ENCODE measurements at regions of chr11 and their contacts with region 1.

Region 1: DNA sequence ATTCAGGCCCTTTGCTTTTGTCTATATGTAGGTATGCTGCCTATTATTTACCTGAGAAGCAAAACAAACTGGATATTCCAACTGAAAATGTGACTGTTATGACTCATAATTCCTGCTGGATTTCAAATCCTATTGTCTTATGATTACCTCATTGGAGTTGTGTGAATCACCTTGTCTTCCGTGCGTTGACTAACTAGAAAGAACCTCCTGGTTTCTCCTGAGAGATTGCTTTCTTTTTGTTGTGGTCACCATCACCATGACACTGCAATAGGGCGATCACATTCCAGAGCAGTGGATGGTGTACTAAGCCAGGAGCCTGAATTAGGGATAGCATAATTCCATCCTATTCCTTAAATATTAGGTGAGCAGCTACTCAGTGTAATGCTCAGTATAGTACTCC is 23.0 kb upstream of the EXPH5 start:
- DNase-seq: peak; percentile 66 to 100
- H3K4me3 ChIP-seq: no peak overlapping the region
- H3K27ac ChIP-seq: peak overlapping the region; percentile 90
- H3K4me1 ChIP-seq: peaks cover 45% of the 10 kb centered on the region
- H3K27me3 ChIP-seq: no peaks in the 10 kb centered on the region
- CTCF ChIP-seq: no peak

Region 2: DNA sequence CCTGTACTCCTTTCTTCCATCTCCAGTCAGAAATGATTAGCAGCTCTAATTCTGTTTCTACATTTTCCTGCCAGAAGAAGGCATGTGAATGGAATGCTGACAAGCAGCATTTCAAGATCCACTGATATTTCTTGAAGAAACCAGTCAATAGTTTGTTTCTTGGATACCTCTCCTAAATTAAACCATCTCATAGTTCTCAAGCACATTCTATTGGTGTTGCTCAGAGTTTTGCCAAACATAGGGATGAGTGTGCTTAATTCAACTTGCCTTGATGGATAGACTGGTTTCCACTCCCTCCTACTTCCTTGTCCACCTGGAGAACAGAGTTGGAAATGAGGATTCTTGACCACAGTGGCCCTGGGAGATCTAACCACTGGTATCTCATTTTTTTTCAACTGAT is 18.5 kb after region 1 on chr11:
- CTCF ChIA-PET with region 1: no interaction called
- POLR2A ChIA-PET with region 1: no interaction called
- intact Hi-C with region 1: loop called (anchors 1 kb)
- DNase-seq: peak; percentile 62 to 100
- H3K4me3 ChIP-seq: 0 out of 2 replicates have a peak overlapping the region, but pooled peaks have one; percentile 20
- H3K27ac ChIP-seq: peak overlapping the region; percentile 95
- H3K4me1 ChIP-seq: peaks cover 27% of the 10 kb centered on the region
- H3K27me3 ChIP-seq: no peaks in the 10 kb centered on the region
- CTCF ChIP-seq: no peak

Region 3: GRCh38 chr11:108803776-108804175 is 187.2 kb after region 1 on chr11:
- CTCF ChIA-PET with region 1: no interaction called
- POLR2A ChIA-PET with region 1: no interaction called
- intact Hi-C with region 1: no loop called
- DNase-seq: no peak
- H3K4me3 ChIP-seq: no peak overlapping the region
- H3K27ac ChIP-seq: no peak overlapping the region
- H3K4me1 ChIP-seq: no peaks in the 10 kb centered on the region
- H3K27me3 ChIP-seq: no peaks in the 10 kb centered on the region
- CTCF ChIP-seq: no peak